ENCODE measurements at regions of chr12 and their contacts with region 1.

Region 1: GRCh38 chr12:64890873-64891468 is 66.5 kb downstream of the TBC1D30 start:
- DNase-seq: no peak
- H3K4me3 Mint-ChIP-seq: no peak overlapping the region
- H3K27ac Mint-ChIP-seq: no peak overlapping the region
- H3K4me1 Mint-ChIP-seq: peaks cover 4% of the 10 kb centered on the region
- H3K27me3 Mint-ChIP-seq: peaks cover 18% of the 10 kb centered on the region

Region 2: DNA sequence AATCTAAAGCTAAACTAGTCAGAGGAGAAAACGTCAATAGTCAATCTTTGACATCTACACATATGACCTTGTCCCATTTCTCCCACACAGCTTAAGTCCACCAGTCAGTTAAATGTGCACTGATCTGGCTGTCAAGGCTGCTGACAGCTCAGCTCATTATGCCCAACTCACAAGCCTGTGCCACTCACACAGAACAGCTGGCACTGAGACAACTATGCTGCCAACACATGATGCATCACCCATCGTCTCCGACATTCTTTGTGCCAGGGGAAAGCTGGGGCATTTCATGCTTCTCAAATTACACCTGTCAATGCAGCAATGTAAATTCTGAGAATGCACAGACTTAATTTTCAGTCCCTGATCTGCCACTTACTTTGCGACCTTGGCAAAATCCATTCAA is 157.1 kb before region 1 on chr12:
- CTCF ChIA-PET with region 1: no interaction called
- intact Hi-C with region 1: no loop called
- DNase-seq: no peak
- H3K4me3 Mint-ChIP-seq: no peak overlapping the region
- H3K27ac Mint-ChIP-seq: no peak overlapping the region
- H3K4me1 Mint-ChIP-seq: peaks cover 33% of the 10 kb centered on the region
- H3K27me3 Mint-ChIP-seq: no peaks in the 10 kb centered on the region

Region 3: DNA sequence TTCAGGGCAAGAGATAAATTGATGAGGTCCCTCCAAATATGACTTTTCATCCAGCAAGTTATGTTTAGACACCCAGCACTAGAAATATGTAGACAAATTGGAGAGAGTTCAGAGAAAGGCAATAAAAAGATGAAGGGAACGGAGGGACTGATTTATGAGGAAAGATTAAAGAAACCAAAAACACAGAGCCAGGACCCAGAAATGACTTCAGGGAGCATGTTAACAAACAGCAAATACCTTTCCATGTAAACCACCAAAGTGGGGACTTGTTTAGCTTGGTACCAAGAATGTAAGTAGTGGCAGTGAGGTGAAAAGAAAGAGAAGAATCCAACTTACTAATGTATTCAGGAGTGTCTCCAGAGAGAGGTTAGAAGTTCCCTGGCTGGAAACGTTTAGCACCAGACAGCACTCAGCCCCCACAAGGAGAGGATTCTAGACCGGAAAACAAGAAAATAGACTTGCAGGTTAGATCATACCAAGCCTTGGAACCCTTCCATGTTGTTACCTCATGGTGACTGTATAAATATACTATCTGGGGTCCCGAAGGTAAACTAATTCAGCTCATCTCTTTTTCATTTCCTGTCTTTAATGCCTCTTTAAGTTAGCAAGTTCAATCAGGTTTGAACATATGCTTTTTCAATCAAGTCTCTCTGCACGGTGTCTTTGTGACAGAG is 12.6 kb after region 1 on chr12:
- CTCF ChIA-PET with region 1: interaction called, 13 read pairs
- intact Hi-C with region 1: no loop called
- DNase-seq: no peak
- H3K4me3 Mint-ChIP-seq: no peak overlapping the region
- H3K27ac Mint-ChIP-seq: no peak overlapping the region
- H3K4me1 Mint-ChIP-seq: no peaks in the 10 kb centered on the region
- H3K27me3 Mint-ChIP-seq: no peaks in the 10 kb centered on the region

Region 4: GRCh38 chr12:65121049-65121955 is 230.3 kb after region 1 on chr12 and contains the start of gene WIF1:
- CTCF ChIA-PET with region 1: interaction called, 5 read pairs
- intact Hi-C with region 1: loop called (anchors 1 kb)
- DNase-seq: peak; percentile 28
- H3K4me3 Mint-ChIP-seq: peak within 1 kb of the TSS; percentile 41
- H3K27ac Mint-ChIP-seq: no peak within 1 kb of the TSS
- H3K4me1 Mint-ChIP-seq: peaks cover 3% of the 10 kb centered on the region
- H3K27me3 Mint-ChIP-seq: peaks cover 24% of the 10 kb centered on the region
- total RNA-seq, gene WIF1: 0.20 TPM in 1 of 2 experiments, not detected in the other

Region 5: DNA sequence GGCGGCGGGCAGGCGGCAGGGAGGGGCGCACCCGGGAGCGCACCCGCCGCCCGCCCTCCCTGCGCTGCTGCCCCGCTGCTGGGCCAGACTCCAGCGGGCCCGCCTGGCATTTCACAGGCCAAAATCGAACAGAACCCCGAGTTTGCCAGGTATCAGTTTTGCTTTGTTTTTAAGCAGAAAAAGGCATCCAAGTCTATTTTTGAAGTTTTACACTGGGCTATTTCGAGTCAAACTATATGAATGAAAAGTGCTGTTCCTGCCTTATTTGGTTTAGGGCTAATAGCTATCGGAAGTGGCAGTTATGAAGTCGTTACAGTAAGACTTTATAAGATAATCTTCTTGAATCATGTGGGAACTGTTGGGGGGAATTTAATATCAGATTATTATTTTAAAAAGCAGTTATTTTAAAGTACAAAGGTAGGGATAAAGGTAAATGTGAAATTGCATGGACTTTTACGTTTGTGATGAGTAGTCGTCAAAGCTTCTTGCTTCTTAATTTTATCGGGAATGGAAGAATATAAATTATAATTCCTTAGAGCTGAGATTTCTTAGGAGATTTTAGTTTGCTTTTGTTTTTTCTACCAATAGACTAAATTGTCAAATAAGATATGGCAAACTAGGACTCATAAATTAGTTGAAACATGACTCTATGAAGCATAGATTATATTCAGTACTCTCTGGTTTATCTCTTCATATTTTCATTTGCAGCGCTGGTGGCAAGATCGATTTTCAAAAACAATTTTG is 388.6 kb after region 1 on chr12:
- CTCF ChIA-PET with region 1: interaction called, 3 read pairs
- intact Hi-C with region 1: loop called (anchors 1 kb)
- DNase-seq: no peak
- H3K4me3 Mint-ChIP-seq: peak overlapping the region; percentile 61
- H3K27ac Mint-ChIP-seq: no peak overlapping the region
- H3K4me1 Mint-ChIP-seq: peaks cover 2% of the 10 kb centered on the region
- H3K27me3 Mint-ChIP-seq: peaks cover 44% of the 10 kb centered on the region

Region 6: GRCh38 chr12:65656904-65657351 is 766.0 kb after region 1 on chr12:
- CTCF ChIA-PET with region 1: no interaction called
- intact Hi-C with region 1: loop called (anchors 10 kb)
- DNase-seq: peak; percentile 30
- H3K4me3 Mint-ChIP-seq: no peak overlapping the region
- H3K27ac Mint-ChIP-seq: peak overlapping the region; percentile 6
- H3K4me1 Mint-ChIP-seq: peaks cover 13% of the 10 kb centered on the region
- H3K27me3 Mint-ChIP-seq: peaks cover 30% of the 10 kb centered on the region

Region 7: GRCh38 chr12:66087365-66087943 is 1196.5 kb after region 1 on chr12:
- CTCF ChIA-PET with region 1: interaction called, 4 read pairs
- intact Hi-C with region 1: loop called (anchors 2 kb)
- DNase-seq: peak; percentile 81
- H3K4me3 Mint-ChIP-seq: no peak overlapping the region
- H3K27ac Mint-ChIP-seq: no peak overlapping the region
- H3K4me1 Mint-ChIP-seq: no peaks in the 10 kb centered on the region
- H3K27me3 Mint-ChIP-seq: peaks cover 12% of the 10 kb centered on the region